Natural killer cell (primary cell): ENCODE measurements at regions of chr1 and their contacts with region 1.

Region 1: DNA sequence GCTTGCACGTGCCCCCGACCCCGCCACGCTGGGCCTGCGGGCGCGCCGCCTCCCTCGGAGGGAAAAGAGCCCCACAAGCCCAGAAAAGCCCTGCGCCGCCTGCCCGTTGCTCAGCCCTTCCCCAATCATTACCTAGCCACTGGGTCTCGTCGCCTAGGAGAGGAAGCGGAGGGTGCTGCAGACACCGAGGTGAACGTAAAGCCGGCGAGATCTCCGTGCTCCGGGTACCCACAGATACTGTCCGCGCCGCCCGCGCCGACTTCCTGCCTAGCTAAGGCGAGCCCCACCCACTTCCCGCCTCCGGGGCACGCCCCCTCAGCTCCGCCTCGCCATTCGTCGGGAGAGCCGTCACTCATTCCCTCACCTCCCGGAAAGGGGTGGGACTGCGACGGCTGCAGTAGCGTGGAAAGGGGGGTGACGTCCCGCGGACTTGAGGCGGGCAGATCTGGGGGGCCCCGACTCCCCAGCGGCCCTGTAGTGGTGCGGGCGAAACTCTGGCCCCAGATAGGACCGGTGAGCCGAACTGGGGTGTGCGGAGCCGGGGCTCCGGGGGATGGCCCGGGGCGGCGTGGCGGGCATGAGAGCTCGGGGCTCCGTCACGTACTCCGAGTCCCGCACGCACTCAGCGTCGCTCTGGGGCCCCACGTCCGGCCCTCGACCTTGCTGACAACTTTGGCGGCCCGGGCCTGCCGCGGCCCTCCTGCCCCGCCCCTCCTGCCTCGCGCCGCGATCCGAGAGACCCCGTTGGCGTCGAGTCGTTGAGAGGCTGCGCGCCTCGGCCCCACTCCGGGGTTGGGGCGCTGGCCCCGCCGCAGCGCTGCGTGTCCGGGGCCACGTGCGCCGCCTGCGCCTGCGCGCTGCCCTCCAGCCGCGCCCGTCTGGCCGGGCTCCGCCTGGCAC is at the start of gene ENO1:
- DNase-seq: peak; percentile 99 to 100
- ATAC-seq: peak; percentile 82 to 95 (median 87)
- H3K4me3 ChIP-seq: peak within 1 kb of the TSS; percentile 67
- H3K4me3 Mint-ChIP-seq: peak within 1 kb of the TSS; percentile 94
- H3K27ac ChIP-seq: peak within 1 kb of the TSS; percentile 97
- H3K27ac Mint-ChIP-seq: peak within 1 kb of the TSS; percentile 95 to 96
- H3K4me1 ChIP-seq: peaks cover 43% of the 10 kb centered on the region
- H3K4me1 Mint-ChIP-seq: peaks cover 46 to 53% of the 10 kb centered on the region in 2 donors
- H3K27me3 ChIP-seq: no peaks in the 10 kb centered on the region
- H3K27me3 Mint-ChIP-seq: no peaks in the 10 kb centered on the region
- CTCF ChIP-seq: no peak
- total RNA-seq, gene ENO1: 254 to 299 (median 266) TPM

Region 2: DNA sequence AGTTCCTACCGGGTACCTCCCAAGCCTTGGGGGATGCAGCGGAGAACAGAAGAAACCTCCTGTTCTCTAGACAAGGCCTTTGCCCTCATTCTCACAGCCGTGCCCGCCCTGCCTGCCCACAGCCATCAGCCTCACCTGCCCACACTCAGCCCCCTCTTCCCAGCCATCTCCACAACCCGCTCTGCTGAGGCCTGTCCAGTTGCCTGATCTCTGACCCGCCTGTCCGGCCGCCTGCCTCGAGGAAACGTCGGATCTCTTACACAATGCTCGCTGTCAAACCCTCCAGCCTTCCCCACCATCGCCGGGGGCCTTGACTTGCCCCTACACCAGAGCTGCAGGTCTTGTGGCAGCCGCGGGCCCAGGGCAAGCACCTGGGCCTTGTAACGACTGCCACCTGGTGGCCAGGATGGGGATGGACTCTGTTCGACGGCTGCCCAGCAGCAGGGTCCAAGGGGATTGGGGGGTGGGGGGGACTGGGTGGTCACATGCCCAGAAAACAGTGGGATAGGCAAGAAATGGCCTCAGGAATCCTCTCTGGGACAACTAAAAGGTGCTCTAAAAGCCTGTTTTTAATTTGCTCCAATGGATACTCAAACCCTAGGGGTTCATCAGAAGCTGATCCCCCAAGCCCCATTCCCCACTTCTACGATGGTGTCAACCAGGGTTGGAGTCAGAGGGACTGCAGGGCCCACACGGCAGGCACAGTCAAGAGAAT is 529.8 kb before region 1 on chr1:
- intact Hi-C with region 1: no loop called
- DNase-seq: peak; percentile 71 to 85
- ATAC-seq: peak; percentile 86 to 98 (median 94)
- H3K4me3 ChIP-seq: no peak overlapping the region
- H3K4me3 Mint-ChIP-seq: no peak overlapping the region
- H3K27ac ChIP-seq: no peak overlapping the region
- H3K27ac Mint-ChIP-seq: peak overlapping the region in 1 of 2 donors; percentile 54
- H3K4me1 ChIP-seq: peaks cover 6% of the 10 kb centered on the region
- H3K4me1 Mint-ChIP-seq: peaks cover 5 to 6% of the 10 kb centered on the region in 2 donors
- H3K27me3 ChIP-seq: no peaks in the 10 kb centered on the region
- H3K27me3 Mint-ChIP-seq: peaks cover 0 to 8% of the 10 kb centered on the region in 2 donors
- CTCF ChIP-seq: peak; percentile 79

Region 3: GRCh38 chr1:8817406-8818324 is 61.0 kb before region 1 on chr1 and contains the start of gene RERE:
- intact Hi-C with region 1: loop called (anchors 5 kb)
- DNase-seq: peak; percentile 97 to 98
- ATAC-seq: peak; percentile 92 to 99 (median 94)
- H3K4me3 ChIP-seq: peak within 1 kb of the TSS; percentile 99
- H3K4me3 Mint-ChIP-seq: peak within 1 kb of the TSS; percentile 94
- H3K27ac ChIP-seq: peak within 1 kb of the TSS; percentile 98
- H3K27ac Mint-ChIP-seq: peak within 1 kb of the TSS; percentile 92 to 95
- H3K4me1 ChIP-seq: peaks cover 2% of the 10 kb centered on the region
- H3K4me1 Mint-ChIP-seq: peaks cover 33 to 37% of the 10 kb centered on the region in 2 donors
- H3K27me3 ChIP-seq: no peaks in the 10 kb centered on the region
- H3K27me3 Mint-ChIP-seq: no peaks in the 10 kb centered on the region
- CTCF ChIP-seq: no peak
- total RNA-seq, gene RERE: 67.7 to 76.0 (median 73.0) TPM

Region 4: DNA sequence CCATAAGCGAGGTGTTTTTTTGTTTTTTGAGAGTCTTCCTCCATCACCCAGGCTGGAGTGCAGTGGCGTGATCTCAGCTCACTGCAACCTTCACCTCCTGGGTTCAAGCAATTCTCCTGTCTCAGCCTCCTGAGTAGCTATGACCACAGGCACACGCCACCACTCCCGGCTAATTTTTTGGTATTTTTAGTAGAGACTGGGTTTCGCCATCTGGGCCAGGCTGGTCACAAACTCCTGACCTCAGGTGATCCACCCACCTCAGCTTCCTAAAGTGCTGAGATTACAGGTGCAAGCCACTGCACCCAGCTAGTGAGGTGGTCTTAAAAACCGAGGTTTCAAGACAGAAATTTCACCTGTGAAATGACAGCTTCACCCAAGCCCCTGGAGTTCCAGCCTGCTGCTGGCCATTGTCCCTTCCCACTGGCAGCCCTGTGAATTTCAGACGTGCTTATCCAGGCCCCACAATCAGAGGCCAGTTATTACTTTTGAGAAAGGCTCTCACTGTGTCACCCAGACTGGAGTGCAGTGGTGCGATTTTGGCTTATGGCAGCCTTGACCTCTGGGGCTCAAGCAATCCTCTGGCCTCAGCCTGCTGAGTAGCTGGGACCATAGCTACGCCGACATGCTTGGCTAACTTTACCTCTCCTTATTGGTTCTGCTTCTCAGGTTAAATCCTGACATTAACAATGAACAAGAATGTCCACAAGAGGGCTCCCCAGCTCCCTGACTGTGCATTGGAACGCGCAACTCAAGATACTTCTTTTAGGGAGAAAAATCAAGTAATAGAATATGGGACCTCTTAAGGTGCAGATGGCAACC is 19.6 kb before region 1 on chr1:
- intact Hi-C with region 1: loop called (anchors 2 kb)
- DNase-seq: peak in 1 of 2 donors; percentile 78
- ATAC-seq: peak; percentile 68 to 78 (median 75)
- H3K4me3 ChIP-seq: no peak overlapping the region
- H3K4me3 Mint-ChIP-seq: no peak overlapping the region
- H3K27ac ChIP-seq: no peak overlapping the region
- H3K27ac Mint-ChIP-seq: peak overlapping the region in 1 of 2 donors; percentile 74
- H3K4me1 ChIP-seq: peaks cover 22% of the 10 kb centered on the region
- H3K4me1 Mint-ChIP-seq: peaks cover 13 to 27% of the 10 kb centered on the region in 2 donors
- H3K27me3 ChIP-seq: no peaks in the 10 kb centered on the region
- H3K27me3 Mint-ChIP-seq: no peaks in the 10 kb centered on the region
- CTCF ChIP-seq: peak; percentile 66

Region 5: DNA sequence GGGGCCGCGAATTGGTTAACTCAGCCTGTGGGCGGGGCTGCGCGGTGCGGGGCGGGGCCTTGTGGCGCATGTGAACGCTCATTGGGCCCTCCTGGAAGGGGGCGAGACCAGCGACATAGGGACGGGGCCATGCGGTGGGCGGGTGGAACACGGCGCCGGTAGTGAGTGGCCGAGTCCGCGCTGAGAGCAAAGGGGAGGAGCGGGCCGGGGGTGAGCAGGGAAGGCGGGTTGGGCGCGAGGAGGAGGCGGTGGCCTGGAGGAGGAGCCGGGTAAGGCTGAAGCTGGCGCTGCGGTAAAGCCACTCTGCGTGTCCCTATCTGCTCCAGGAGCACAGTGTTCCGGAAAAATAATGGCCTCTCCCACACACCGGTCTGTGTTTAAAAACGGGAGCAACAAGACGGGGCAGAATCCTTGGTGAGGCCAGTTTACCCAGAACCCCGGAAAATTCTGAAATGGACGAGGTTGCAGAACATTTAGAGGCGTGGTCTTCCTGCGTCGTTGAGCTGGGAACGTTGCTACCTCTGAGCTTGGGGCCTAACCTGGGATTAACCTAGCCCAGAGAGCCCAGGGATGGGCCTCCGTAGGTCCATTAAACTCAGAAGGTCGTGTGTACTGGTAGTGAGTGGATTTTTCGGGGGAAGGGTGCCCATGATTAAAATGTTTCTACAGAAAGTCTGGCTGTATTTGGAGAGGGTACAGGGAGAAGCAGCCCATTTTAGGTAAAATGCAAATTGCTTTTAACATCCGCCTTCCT is 1031.9 kb after region 1 on chr1:
- intact Hi-C with region 1: loop called (anchors 10 kb)
- DNase-seq: peak; percentile 99 to 100
- ATAC-seq: peak; percentile 86 to 97 (median 88)
- H3K4me3 ChIP-seq: peak overlapping the region; percentile 87
- H3K4me3 Mint-ChIP-seq: peak overlapping the region; percentile 92
- H3K27ac ChIP-seq: peak overlapping the region; percentile 80
- H3K27ac Mint-ChIP-seq: peak overlapping the region; percentile 91 to 93
- H3K4me1 ChIP-seq: peaks cover 22% of the 10 kb centered on the region
- H3K4me1 Mint-ChIP-seq: peaks cover 35 to 46% of the 10 kb centered on the region in 2 donors
- H3K27me3 ChIP-seq: no peaks in the 10 kb centered on the region
- H3K27me3 Mint-ChIP-seq: no peaks in the 10 kb centered on the region
- CTCF ChIP-seq: no peak